ENCODE measurements at regions of chr1 and their contacts with region 1.

Region 1: GRCh38 chr1:16307222-16307621 is 45.1 kb downstream of the FBXO42 start:
- DNase-seq: no peak
- ATAC-seq: no peak
- H3K4me3 ChIP-seq: no peak overlapping the region
- H3K27ac ChIP-seq: no peak overlapping the region
- H3K4me1 ChIP-seq: no peaks in the 10 kb centered on the region
- H3K27me3 ChIP-seq: no peaks in the 10 kb centered on the region
- CTCF ChIP-seq: no peak
- POLR2A ChIP-seq: no peak
- RAD21 ChIP-seq: no peak

Region 2: DNA sequence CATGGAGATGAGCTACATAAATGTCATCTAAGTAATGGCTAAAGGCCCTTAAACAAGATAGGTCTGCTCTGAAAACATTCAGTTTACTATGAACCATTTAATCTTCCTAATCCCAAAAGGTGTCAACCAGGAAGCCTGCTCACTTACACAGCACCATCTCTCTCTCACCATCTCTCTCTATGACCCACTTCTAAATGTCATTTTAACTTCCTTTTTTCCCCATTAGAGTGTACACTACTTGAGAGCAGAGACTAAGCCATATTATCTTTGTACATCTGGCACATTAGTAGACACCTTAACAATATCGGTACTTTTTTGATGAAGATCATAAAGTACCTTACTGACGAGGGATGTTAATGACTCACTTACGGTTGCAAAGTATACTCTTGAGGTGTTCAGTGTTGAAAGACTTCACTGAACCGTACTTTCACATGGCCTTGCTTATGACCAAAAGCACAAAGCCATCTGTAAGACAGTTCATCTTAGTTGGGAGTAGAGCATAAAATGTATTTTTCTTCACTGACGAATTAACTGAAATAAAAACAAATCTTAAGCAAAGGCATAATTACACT is 19.7 kb after region 1 on chr1:
- CTCF ChIA-PET with region 1: interaction called, 11 read pairs
- POLR2A ChIA-PET with region 1: no interaction called
- dilution Hi-C with region 1: no loop called
- in situ Hi-C with region 1: no loop called
- intact Hi-C with region 1: no loop called
- DNase-seq: no peak
- ATAC-seq: no peak
- H3K4me3 ChIP-seq: no peak overlapping the region
- H3K27ac ChIP-seq: no peak overlapping the region
- H3K4me1 ChIP-seq: peaks cover 2% of the 10 kb centered on the region
- H3K27me3 ChIP-seq: no peaks in the 10 kb centered on the region
- CTCF ChIP-seq: no peak
- POLR2A ChIP-seq: no peak
- RAD21 ChIP-seq: no peak